Tibial artery (tissue), 4 donors: ENCODE measurements at regions of chr21 and their contacts with region 1.

Region 1: GRCh38 chr21:39313571-39314142 is at the start of gene BRWD1:
- DNase-seq: peak; percentile 66 to 88
- H3K4me3 ChIP-seq: peak within 1 kb of the TSS; percentile 95 to 98
- H3K27ac ChIP-seq: peak within 1 kb of the TSS; percentile 96 to 98
- H3K4me1 ChIP-seq: peaks cover 0 to 17% (median 5%) of the 10 kb centered on the region in 4 donors
- H3K27me3 ChIP-seq: no peaks in the 10 kb centered on the region
- CTCF ChIP-seq: peak; percentile 25 to 35

Region 2: GRCh38 chr21:39251326-39251725 is 62.3 kb before region 1 on chr21:
- intact Hi-C with region 1: loop called (anchors 2 kb)
- DNase-seq: no peak
- H3K4me3 ChIP-seq: no peak overlapping the region
- H3K27ac ChIP-seq: no peak overlapping the region
- H3K4me1 ChIP-seq: peaks cover 0 to 20% (median 0%) of the 10 kb centered on the region in 4 donors
- H3K27me3 ChIP-seq: no peaks in the 10 kb centered on the region
- CTCF ChIP-seq: no peak

Region 3: GRCh38 chr21:39349211-39350093 is 35.8 kb after region 1 on chr21:
- intact Hi-C with region 1: loop called (anchors 2 kb)
- DNase-seq: peak; percentile 91 to 95
- H3K4me3 ChIP-seq: peak overlapping the region; percentile 68 to 76
- H3K27ac ChIP-seq: peak overlapping the region; percentile 82 to 85
- H3K4me1 ChIP-seq: peaks cover 0 to 24% (median 10%) of the 10 kb centered on the region in 4 donors
- H3K27me3 ChIP-seq: no peaks in the 10 kb centered on the region
- CTCF ChIP-seq: no peak